Activated CD4-positive, alpha-beta T cell treated with anti-CD3 and anti-CD28 coated beads for 36 hours (primary cell): ENCODE measurements at regions of chr16 and their contacts with region 1.

Region 1: GRCh38 chr16:62386411-62386810 is 350.2 kb upstream of the CDH8 start:
- DNase-seq: no peak
- ATAC-seq: no peak
- H3K4me3 Mint-ChIP-seq: no peak overlapping the region
- H3K27ac Mint-ChIP-seq: no peak overlapping the region
- H3K4me1 Mint-ChIP-seq: no peaks in the 10 kb centered on the region
- H3K27me3 Mint-ChIP-seq: no peaks in the 10 kb centered on the region

Region 2: GRCh38 chr16:62335356-62335755 is 51.1 kb before region 1 on chr16:
- CTCF ChIA-PET with region 1: no interaction called
- POLR2A ChIA-PET with region 1: no interaction called
- intact Hi-C with region 1: no loop called
- DNase-seq: no peak
- ATAC-seq: no peak
- H3K4me3 Mint-ChIP-seq: no peak overlapping the region
- H3K27ac Mint-ChIP-seq: no peak overlapping the region
- H3K4me1 Mint-ChIP-seq: no peaks in the 10 kb centered on the region
- H3K27me3 Mint-ChIP-seq: no peaks in the 10 kb centered on the region

Region 3: GRCh38 chr16:62445909-62446308 is 59.5 kb after region 1 on chr16:
- CTCF ChIA-PET with region 1: no interaction called
- POLR2A ChIA-PET with region 1: no interaction called
- intact Hi-C with region 1: loop called in 1 of 2 experiments (anchors 10 kb)
- DNase-seq: no peak
- ATAC-seq: no peak
- H3K4me3 Mint-ChIP-seq: no peak overlapping the region
- H3K27ac Mint-ChIP-seq: no peak overlapping the region
- H3K4me1 Mint-ChIP-seq: no peaks in the 10 kb centered on the region
- H3K27me3 Mint-ChIP-seq: no peaks in the 10 kb centered on the region

Region 4: GRCh38 chr16:62585041-62585545 is 198.7 kb after region 1 on chr16:
- CTCF ChIA-PET with region 1: no interaction called
- POLR2A ChIA-PET with region 1: no interaction called
- intact Hi-C with region 1: no loop called
- DNase-seq: no peak
- ATAC-seq: no peak
- H3K4me3 Mint-ChIP-seq: no peak overlapping the region
- H3K27ac Mint-ChIP-seq: peak overlapping the region; percentile 31
- H3K4me1 Mint-ChIP-seq: no peaks in the 10 kb centered on the region
- H3K27me3 Mint-ChIP-seq: no peaks in the 10 kb centered on the region

Region 5: DNA sequence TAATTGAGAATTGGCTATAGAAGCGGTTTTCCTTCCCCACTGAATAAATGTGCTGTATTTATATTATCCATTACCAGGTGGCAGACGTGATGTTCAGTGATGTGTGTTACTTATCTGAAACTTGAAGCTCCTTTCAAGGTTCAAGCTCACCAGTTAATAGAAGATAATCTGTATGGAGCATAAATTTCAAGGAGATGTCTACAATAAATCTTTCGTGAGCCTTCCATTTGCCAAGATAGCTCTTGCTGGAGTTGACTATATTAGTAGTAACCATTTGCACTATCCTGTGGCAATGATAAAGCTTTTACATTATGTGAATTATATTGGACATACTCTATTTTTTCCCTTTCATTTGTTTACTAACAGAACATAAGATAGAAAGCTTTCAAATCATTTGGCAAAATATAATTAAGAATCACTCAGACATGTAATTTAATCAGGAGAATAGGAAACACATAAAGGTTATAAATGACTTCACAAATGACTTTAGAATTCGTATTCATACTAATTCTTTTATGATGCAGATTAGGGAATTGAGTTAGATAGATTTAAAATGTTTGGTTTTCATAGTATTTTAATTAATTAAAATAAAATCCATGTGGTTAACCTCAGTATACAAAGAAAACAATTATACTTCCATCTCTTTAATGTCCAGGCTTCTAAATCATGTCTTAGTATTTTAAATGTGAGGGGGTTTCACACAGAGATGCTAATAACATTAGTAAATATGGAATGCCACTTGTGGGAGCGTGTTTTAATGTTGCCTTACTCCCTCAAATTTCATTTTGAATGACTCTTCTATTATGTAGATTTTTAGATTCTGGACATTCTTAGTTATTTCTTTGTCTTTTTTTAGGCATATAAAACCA is 314.2 kb after region 1 on chr16:
- CTCF ChIA-PET with region 1: no interaction called
- POLR2A ChIA-PET with region 1: no interaction called
- intact Hi-C with region 1: no loop called
- DNase-seq: no peak
- ATAC-seq: no peak
- H3K4me3 Mint-ChIP-seq: no peak overlapping the region
- H3K27ac Mint-ChIP-seq: no peak overlapping the region
- H3K4me1 Mint-ChIP-seq: no peaks in the 10 kb centered on the region
- H3K27me3 Mint-ChIP-seq: no peaks in the 10 kb centered on the region